ENCODE measurements at regions of chr1 and their contacts with region 1.

Region 1: GRCh38 chr1:167442124-167442848 is 76.0 kb downstream of the CD247 start:
- DNase-seq: peak; percentile 49
- H3K4me3 ChIP-seq: no peak overlapping the region
- H3K27ac ChIP-seq: no peak overlapping the region
- H3K4me1 ChIP-seq: no peaks in the 10 kb centered on the region
- H3K27me3 ChIP-seq: peaks cover 0 to 4% of the 10 kb centered on the region in 2 experiments
- CTCF ChIP-seq: peak; percentile 81 to 88
- POLR2A ChIP-seq: no peak

Region 2: GRCh38 chr1:167288390-167289074 is 153.8 kb before region 1 on chr1:
- CTCF ChIA-PET with region 1: no interaction called
- POLR2A ChIA-PET with region 1: no interaction called
- dilution Hi-C with region 1: no loop called
- intact Hi-C with region 1: no loop called
- DNase-seq: no peak
- H3K4me3 ChIP-seq: no peak overlapping the region
- H3K27ac ChIP-seq: no peak overlapping the region
- H3K4me1 ChIP-seq: peaks cover 10% of the 10 kb centered on the region
- H3K27me3 ChIP-seq: no peaks in the 10 kb centered on the region
- CTCF ChIP-seq: no peak
- POLR2A ChIP-seq: no peak

Region 3: GRCh38 chr1:167401260-167401873 is 40.9 kb before region 1 on chr1:
- CTCF ChIA-PET with region 1: interaction called, 4 read pairs
- POLR2A ChIA-PET with region 1: no interaction called
- dilution Hi-C with region 1: no loop called
- intact Hi-C with region 1: loop called (anchors 1 kb)
- DNase-seq: peak; percentile 61
- H3K4me3 ChIP-seq: no peak overlapping the region
- H3K27ac ChIP-seq: no peak overlapping the region
- H3K4me1 ChIP-seq: peaks cover 15% of the 10 kb centered on the region
- H3K27me3 ChIP-seq: no peaks in the 10 kb centered on the region
- CTCF ChIP-seq: peak; percentile 42 to 64
- POLR2A ChIP-seq: no peak

Measured in endothelial cell of umbilical vein (primary cell).